Heart left ventricle (tissue), 16 donors: ENCODE measurements at regions of chr1 and their contacts with region 1.

Region 1: DNA sequence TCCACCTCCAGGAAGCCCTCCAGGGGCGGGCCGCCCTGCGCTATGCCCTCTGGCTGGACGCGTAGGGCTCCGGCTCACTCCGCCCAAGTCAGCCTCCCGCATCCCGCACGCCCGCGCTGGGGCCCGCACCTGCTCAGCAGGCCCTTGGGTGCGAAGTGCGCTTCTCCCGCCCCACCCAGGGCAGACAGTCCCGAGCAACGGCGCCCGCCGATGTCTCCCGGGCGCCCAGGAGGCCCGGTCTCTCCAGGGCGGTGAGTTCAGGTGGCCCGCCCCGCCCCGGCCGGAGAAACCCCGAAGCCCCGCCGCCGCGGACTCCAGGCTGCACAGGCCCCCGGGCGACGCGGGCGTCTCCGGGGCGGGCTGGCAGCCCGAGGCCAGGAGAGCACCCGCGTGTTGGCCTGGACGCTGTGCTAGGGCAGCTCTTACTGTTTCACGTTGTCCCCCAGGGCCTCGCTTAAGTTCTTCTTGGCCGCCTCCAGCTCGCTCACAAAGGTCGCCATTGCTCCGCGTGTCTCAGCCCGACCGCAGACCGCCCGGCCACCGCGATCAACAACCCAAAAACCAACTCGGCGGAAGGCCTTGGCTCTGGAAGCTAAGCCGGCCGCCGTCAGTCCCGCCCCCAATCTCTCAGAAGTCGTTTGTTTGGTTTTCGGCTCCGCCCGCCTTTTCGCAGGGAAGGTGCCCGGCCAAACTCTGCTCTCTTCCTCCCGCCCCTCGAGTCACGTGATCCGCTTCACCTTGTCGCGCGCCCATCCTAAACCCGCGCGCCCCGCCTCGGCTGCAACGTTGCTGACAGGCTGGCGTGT is at the start of gene TADA1:
- DNase-seq: peak; percentile 98 to 99 (median 99)
- ATAC-seq: peak; percentile 96 to 98 (median 97)
- H3K4me3 ChIP-seq: peak within 1 kb of the TSS; percentile 75 to 100 (median 86)
- H3K27ac ChIP-seq: peak within 1 kb of the TSS; percentile 82 to 96 (median 90)
- H3K4me1 ChIP-seq: peaks cover 0 to 36% (median 18%) of the 10 kb centered on the region in 12 donors
- H3K27me3 ChIP-seq: no peaks in the 10 kb centered on the region
- CTCF ChIP-seq: peak in 5 of 12 donors; percentile 26 to 47 (median 42)
- POLR2A ChIP-seq: peak in 1 of 2 donors; percentile 85
- total RNA-seq, gene TADA1: 7.2 to 10.8 (median 9.3) TPM

Region 2: DNA sequence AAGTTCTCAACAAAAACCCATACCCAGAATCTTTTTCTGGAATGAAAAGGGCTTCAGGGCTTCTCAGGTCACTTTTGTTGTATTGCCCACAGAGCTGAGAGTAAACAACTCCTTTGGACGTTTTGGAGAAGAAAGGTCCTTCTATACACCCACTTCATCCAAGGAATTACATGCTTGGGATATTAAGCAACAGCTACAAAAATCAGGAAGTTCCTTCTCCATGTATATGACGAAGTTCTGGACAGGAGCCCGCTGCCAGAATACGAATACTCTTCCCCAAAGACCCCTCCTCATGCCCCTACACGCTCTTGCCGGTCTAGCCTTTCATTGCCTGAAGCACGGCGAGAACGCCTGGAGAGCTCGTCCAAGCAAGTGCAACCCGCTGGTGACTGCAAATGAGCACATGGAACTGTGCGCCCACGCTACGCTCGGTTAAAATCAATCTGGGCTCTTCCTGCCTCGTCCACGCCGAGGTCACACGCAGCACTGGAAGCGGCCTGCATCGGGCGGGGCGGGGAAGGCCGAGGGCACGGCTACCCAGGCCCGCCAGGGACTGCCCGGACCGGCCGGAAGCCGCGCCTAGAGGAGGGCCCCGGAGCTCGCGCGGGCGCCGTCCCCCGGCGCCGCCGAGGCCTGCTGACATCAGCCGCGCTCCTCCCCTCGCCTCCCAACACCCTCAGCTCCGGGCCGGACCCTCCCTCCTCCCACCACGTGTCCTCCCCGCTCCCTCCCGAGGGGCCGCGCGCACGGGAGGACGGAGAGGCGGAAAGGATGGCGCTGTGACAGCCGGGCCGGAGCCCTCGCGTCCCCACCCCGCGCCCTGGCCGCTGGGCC is 37.0 kb before region 1 on chr1 and contains the start of gene POGK:
- intact Hi-C with region 1: loop called in 4 of 10 experiments (anchors 2 to 5 kb)
- DNase-seq: peak; percentile 94 to 96 (median 96)
- ATAC-seq: peak; percentile 83 to 97 (median 96)
- H3K4me3 ChIP-seq: peak within 1 kb of the TSS; percentile 59 to 89 (median 79)
- H3K27ac ChIP-seq: peak within 1 kb of the TSS; percentile 81 to 96 (median 92)
- H3K4me1 ChIP-seq: peaks cover 4 to 53% (median 48%) of the 10 kb centered on the region in 12 donors
- H3K27me3 ChIP-seq: no peaks in the 10 kb centered on the region
- CTCF ChIP-seq: peak in 3 of 12 donors; percentile 8 to 12 (median 11)
- POLR2A ChIP-seq: peak in 1 of 2 donors; percentile 81
- total RNA-seq, gene POGK: 12.1 to 20.8 (median 16.6) TPM

Region 3: DNA sequence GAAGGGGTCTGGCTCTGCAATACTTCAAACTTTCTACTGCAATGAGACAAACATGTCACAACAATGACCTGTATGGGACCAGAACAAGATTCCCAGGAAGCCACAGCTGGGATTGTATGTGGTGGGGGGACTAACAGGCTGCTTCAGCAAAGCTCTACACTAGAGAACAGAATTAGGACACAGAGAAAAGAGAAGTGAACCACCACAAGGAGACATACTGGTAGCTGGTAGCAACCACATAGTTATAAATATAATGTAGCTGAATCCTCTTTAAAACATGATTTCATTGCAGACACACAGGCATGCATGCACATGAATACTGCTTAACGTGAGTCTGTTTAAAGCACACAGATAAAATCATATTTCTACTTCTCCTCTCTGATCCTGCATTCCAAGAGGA is 102.9 kb after region 1 on chr1:
- intact Hi-C with region 1: no loop called
- DNase-seq: no peak
- ATAC-seq: no peak
- H3K4me3 ChIP-seq: no peak overlapping the region
- H3K27ac ChIP-seq: no peak overlapping the region
- H3K4me1 ChIP-seq: peaks cover 0 to 17% (median 2%) of the 10 kb centered on the region in 12 donors
- H3K27me3 ChIP-seq: peaks cover 0 to 28% (median under 1%) of the 10 kb centered on the region in 9 donors
- CTCF ChIP-seq: no peak
- POLR2A ChIP-seq: no peak